Activated CD8-positive, alpha-beta T cell treated with anti-CD3 and anti-CD28 coated beads, Interleukin-2, amount 10 ng/mL, durations not matched to agents 7 days and 5 days (primary cell): ENCODE measurements at regions of chr4 and their contacts with region 1.

Region 1: GRCh38 chr4:98143001-98143899 is at the start of gene STPG2:
- DNase-seq: peak; percentile 94
- ATAC-seq: peak; percentile 100
- H3K4me3 Mint-ChIP-seq: peak within 1 kb of the TSS; percentile 87
- H3K27ac Mint-ChIP-seq: peak within 1 kb of the TSS; percentile 94
- H3K4me1 Mint-ChIP-seq: peaks cover 26% of the 10 kb centered on the region
- H3K27me3 Mint-ChIP-seq: peaks cover 4% of the 10 kb centered on the region
- total RNA-seq, gene STPG2: not detected

Region 2: DNA sequence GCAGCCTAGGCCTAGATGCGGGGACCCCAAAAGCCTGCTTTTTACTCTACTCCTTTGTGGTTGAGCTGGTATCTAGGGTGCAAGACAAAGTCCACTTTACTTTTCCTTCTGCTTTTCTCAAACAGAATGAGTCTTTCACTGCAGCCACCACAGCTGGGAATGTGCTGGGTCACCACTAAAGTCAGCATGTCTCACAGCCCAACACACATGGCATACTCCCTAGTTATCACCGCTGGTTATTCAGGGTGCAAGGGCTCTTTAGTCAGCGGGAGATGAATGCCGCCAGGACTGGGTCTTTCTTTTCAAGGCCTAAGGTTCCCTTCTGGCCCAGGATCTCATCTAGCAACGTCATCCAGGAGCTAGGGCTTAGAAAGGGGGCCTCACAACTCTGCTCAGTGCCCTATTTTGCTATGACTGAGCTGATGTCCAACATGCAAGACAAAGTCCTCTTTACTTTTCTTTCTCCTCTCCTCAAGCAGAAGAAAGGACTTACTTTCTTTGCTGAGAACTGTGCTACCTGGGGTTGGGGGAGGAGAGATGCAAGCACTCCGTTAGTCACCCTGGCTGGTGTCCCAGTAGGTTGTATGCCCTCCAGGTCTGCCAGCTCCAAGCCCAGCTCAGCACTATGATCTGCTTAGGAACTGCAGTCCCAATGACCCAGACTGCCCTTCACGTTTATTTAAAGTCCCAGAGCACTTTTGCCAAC is 22.9 kb after region 1 on chr4:
- CTCF ChIA-PET with region 1: no interaction called
- POLR2A ChIA-PET with region 1: no interaction called
- DNase-seq: no peak
- ATAC-seq: no peak
- H3K4me3 Mint-ChIP-seq: no peak overlapping the region
- H3K27ac Mint-ChIP-seq: no peak overlapping the region
- H3K4me1 Mint-ChIP-seq: no peaks in the 10 kb centered on the region
- H3K27me3 Mint-ChIP-seq: peaks cover 5% of the 10 kb centered on the region

Region 3: GRCh38 chr4:98203332-98204235 is 60.3 kb after region 1 on chr4:
- CTCF ChIA-PET with region 1: no interaction called
- POLR2A ChIA-PET with region 1: no interaction called
- DNase-seq: no peak
- ATAC-seq: no peak
- H3K4me3 Mint-ChIP-seq: peak overlapping the region; percentile 10
- H3K27ac Mint-ChIP-seq: no peak overlapping the region
- H3K4me1 Mint-ChIP-seq: peaks cover 9% of the 10 kb centered on the region
- H3K27me3 Mint-ChIP-seq: peaks cover 3% of the 10 kb centered on the region

Region 4: DNA sequence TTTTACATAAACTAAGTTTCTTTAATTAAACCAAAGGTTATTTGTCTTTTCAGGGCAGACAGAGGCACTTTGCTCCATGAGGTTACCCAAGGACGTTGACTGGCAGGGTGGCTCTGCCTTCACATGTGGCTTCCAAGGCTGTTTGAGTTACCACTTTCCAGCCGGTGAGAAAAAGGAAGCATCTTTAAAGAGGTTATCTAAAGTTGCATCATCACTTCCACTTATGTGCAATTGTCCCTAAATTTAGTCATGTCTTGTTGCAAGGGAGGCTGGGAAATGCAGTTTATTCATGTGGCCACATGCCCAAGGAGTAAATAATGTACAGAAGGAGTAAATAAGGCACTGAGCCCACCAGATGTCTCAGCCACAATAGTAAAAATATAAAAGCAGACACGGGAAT is 89.0 kb after region 1 on chr4:
- CTCF ChIA-PET with region 1: no interaction called
- POLR2A ChIA-PET with region 1: no interaction called
- DNase-seq: no peak
- ATAC-seq: no peak
- H3K4me3 Mint-ChIP-seq: no peak overlapping the region
- H3K27ac Mint-ChIP-seq: no peak overlapping the region
- H3K4me1 Mint-ChIP-seq: no peaks in the 10 kb centered on the region
- H3K27me3 Mint-ChIP-seq: peaks cover 2% of the 10 kb centered on the region

Region 5: GRCh38 chr4:98260579-98261290 is 117.5 kb after region 1 on chr4:
- CTCF ChIA-PET with region 1: interaction called, 4 read pairs
- POLR2A ChIA-PET with region 1: interaction called, 14 read pairs
- DNase-seq: peak; percentile 93
- ATAC-seq: peak; percentile 89
- H3K4me3 Mint-ChIP-seq: peak overlapping the region; percentile 93
- H3K27ac Mint-ChIP-seq: peak overlapping the region; percentile 97
- H3K4me1 Mint-ChIP-seq: peaks cover 42% of the 10 kb centered on the region
- H3K27me3 Mint-ChIP-seq: no peaks in the 10 kb centered on the region

Region 6: GRCh38 chr4:98283219-98284189 is 140.3 kb after region 1 on chr4:
- CTCF ChIA-PET with region 1: no interaction called
- POLR2A ChIA-PET with region 1: no interaction called
- DNase-seq: no peak
- ATAC-seq: no peak
- H3K4me3 Mint-ChIP-seq: no peak overlapping the region
- H3K27ac Mint-ChIP-seq: no peak overlapping the region
- H3K4me1 Mint-ChIP-seq: peaks cover 25% of the 10 kb centered on the region
- H3K27me3 Mint-ChIP-seq: no peaks in the 10 kb centered on the region